Pancreas (tissue), 10 donors: ENCODE measurements at regions of chr13 and their contacts with region 1.

Region 1: GRCh38 chr13:51452361-51453206 is at the start of gene INTS6:
- DNase-seq: peak; percentile 96 to 100 (median 99)
- ATAC-seq: peak; percentile 82 to 92 (median 84)
- H3K4me3 ChIP-seq: peak within 1 kb of the TSS; percentile 90 to 94 (median 91)
- H3K27ac ChIP-seq: peak within 1 kb of the TSS; percentile 95 to 99 (median 98)
- H3K4me1 ChIP-seq: peaks cover 11 to 31% (median 26%) of the 10 kb centered on the region in 3 donors
- H3K27me3 ChIP-seq: no peaks in the 10 kb centered on the region
- CTCF ChIP-seq: no peak
- total RNA-seq, gene INTS6: 23.7 to 44.8 (median 29.7) TPM

Region 2: DNA sequence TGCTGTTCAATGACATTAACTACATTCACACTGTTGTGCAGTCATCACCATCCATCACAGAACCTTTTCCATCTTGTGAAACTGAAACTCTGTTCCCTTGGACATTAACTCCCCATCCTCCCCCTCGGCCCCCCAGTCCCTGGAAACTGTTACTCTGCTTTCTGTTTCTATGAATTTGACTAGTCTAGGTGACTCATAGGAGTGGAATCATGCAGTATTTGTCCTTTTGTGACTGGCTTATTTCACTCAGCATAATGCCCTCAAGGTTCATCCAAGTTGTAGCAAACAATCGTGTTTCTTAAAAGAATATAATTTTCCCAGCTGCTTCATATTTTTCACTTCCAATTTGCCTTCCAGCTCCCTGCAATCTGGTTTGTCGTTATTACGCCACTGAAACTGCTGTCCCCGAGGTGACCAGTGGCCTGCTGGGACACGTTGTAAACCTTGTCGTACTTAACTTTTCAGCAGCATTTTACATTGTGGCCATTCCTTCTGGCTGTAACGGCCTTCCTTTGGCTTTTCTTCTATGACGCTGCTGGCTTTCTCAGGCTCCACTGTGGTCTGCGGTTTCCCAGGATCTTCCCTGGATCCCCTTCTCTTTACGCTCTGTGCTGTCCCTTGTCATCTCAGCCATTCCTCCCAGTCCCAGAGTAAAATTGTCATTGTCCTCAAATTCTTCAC is 277.4 kb after region 1 on chr13:
- intact Hi-C with region 1: loop called in 1 of 3 experiments (anchors 10 kb)
- DNase-seq: peak in 1 of 6 donors; percentile 55
- ATAC-seq: peak; percentile 27 to 65 (median 44)
- H3K4me3 ChIP-seq: no peak overlapping the region
- H3K27ac ChIP-seq: peak overlapping the region in 2 of 4 donors; percentile 75 to 85
- H3K4me1 ChIP-seq: peaks cover 44 to 65% (median 57%) of the 10 kb centered on the region in 3 donors
- H3K27me3 ChIP-seq: no peaks in the 10 kb centered on the region
- CTCF ChIP-seq: no peak